H1 (cell line): ENCODE measurements at regions of chr2 and their contacts with region 1.

Region 1: GRCh38 chr2:100610381-100610831 is 47.6 kb downstream of the PDCL3 start:
- DNase-seq: peak; percentile 36 to 85
- H3K4me3 ChIP-seq: no peak overlapping the region
- H3K27ac ChIP-seq: no peak overlapping the region
- H3K4me1 ChIP-seq: peaks cover 0 to 4% (median 2%) of the 10 kb centered on the region in 4 experiments; a peak in 2 of 7 replicates
- H3K27me3 ChIP-seq: no peaks in the 10 kb centered on the region
- CTCF ChIP-seq: peak; percentile 85 to 91 (median 89)
- EP300 ChIP-seq: no peak
- POLR2A ChIP-seq: no peak
- RAD21 ChIP-seq: peak; percentile 97 to 98

Region 2: GRCh38 chr2:100588071-100588786 is 22.2 kb before region 1 on chr2:
- CTCF ChIA-PET with region 1: interaction called, 17 read pairs
- POLR2A ChIA-PET with region 1: no interaction called
- DNase-seq: no peak
- H3K4me3 ChIP-seq: no peak overlapping the region
- H3K27ac ChIP-seq: no peak overlapping the region
- H3K4me1 ChIP-seq: no peaks in the 10 kb centered on the region
- H3K27me3 ChIP-seq: no peaks in the 10 kb centered on the region
- CTCF ChIP-seq: no peak
- EP300 ChIP-seq: no peak
- POLR2A ChIP-seq: no peak
- RAD21 ChIP-seq: no peak

Region 3: GRCh38 chr2:100640431-100641124 is 30.2 kb after region 1 on chr2:
- CTCF ChIA-PET with region 1: interaction called, 14 read pairs
- POLR2A ChIA-PET with region 1: no interaction called
- DNase-seq: peak in 1 of 2 experiments; percentile 38
- H3K4me3 ChIP-seq: peak overlapping the region in 1 of 4 experiments; percentile 5; a peak in 1 of 8 replicates
- H3K27ac ChIP-seq: no peak overlapping the region
- H3K4me1 ChIP-seq: peaks cover 3 to 12% (median 6%) of the 10 kb centered on the region in 4 experiments
- H3K27me3 ChIP-seq: no peaks in the 10 kb centered on the region
- CTCF ChIP-seq: no peak
- EP300 ChIP-seq: no peak
- POLR2A ChIP-seq: no peak
- RAD21 ChIP-seq: no peak

Region 4: DNA sequence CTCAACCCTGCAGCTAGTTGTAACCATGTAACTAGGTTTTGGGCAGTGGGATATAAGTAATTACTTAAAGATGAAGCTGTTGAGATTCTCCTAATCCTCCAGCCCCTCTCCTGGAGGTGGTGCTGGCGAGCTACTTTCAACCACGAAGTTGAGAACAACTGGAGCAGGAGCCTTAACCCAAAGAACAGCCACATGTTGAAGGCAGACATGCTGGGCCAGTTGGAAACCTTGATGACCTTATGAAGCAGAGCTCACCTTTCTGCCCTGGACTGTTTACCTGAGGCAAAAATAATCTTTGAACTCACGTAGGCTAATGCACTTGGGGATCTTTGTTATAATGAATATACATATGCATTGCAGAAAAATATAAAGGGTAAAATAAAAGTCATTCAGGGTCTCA is 119.9 kb after region 1 on chr2:
- CTCF ChIA-PET with region 1: interaction called, 18 read pairs
- POLR2A ChIA-PET with region 1: no interaction called
- DNase-seq: peak; percentile 43 to 68
- H3K4me3 ChIP-seq: no peak overlapping the region
- H3K27ac ChIP-seq: no peak overlapping the region
- H3K4me1 ChIP-seq: peaks cover 0 to 6% (median 2%) of the 10 kb centered on the region in 4 experiments; a peak in 3 of 7 replicates
- H3K27me3 ChIP-seq: no peaks in the 10 kb centered on the region
- CTCF ChIP-seq: peak; percentile 50 to 84 (median 73)
- EP300 ChIP-seq: no peak
- POLR2A ChIP-seq: no peak
- RAD21 ChIP-seq: peak; percentile 91 to 94

Region 5: GRCh38 chr2:100983684-100984310 is 373.4 kb after region 1 on chr2:
- CTCF ChIA-PET with region 1: interaction called, 13 read pairs
- POLR2A ChIA-PET with region 1: no interaction called
- DNase-seq: no peak
- H3K4me3 ChIP-seq: no peak overlapping the region
- H3K27ac ChIP-seq: no peak overlapping the region
- H3K4me1 ChIP-seq: peaks cover 0 to 5% (median under 1%) of the 10 kb centered on the region in 4 experiments; a peak in 3 of 7 replicates
- H3K27me3 ChIP-seq: no peaks in the 10 kb centered on the region
- CTCF ChIP-seq: no peak
- EP300 ChIP-seq: no peak
- POLR2A ChIP-seq: no peak
- RAD21 ChIP-seq: peak; percentile 7 to 20; a peak in 2 of 4 replicates

Region 6: DNA sequence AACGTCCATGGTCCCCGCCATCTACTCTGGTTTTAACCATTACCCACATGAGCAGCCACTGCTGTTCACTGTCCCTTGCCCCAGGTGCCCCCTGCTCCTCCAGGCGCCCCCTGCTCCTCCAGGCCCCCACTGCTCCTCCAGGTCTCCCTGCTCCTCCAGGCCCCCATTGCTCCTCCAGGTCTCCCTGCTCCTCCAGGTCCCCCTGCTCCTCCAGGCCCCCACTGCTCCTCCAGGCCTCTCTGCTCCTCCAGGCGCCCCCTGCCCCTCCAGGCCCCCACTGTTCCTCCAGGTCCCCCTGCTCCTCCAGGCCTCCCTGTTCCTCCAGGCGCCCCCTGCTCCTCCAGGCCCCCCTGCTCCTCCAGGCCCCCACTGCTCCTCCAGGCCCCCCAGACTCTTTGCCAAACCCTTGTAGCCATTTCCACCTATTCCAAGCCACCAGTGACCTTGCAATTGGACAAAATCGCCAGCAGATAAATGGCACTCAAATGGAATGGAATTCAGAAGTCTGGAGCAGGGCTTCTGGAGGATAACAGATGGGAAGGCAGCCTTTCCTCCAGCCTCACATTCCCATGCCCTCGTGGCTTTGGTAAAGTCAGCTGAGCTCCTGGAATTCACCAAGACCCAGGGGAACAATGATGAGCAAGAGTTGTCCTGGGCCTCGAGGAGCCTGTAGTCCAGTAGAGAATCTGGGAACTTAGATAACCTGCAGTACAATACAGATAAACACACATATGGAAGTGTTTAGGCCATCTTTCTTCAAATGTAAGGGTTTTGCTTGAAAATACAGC is 378.4 kb after region 1 on chr2:
- CTCF ChIA-PET with region 1: interaction called, 14 read pairs
- POLR2A ChIA-PET with region 1: no interaction called
- DNase-seq: no peak
- H3K4me3 ChIP-seq: no peak overlapping the region
- H3K27ac ChIP-seq: no peak overlapping the region
- H3K4me1 ChIP-seq: peaks cover 0 to 2% (median under 1%) of the 10 kb centered on the region in 4 experiments; a peak in 2 of 7 replicates
- H3K27me3 ChIP-seq: no peaks in the 10 kb centered on the region
- CTCF ChIP-seq: no peak
- EP300 ChIP-seq: no peak
- POLR2A ChIP-seq: no peak
- RAD21 ChIP-seq: no peak